ENCODE measurements at regions of chr7 and their contacts with region 1.

Region 1: DNA sequence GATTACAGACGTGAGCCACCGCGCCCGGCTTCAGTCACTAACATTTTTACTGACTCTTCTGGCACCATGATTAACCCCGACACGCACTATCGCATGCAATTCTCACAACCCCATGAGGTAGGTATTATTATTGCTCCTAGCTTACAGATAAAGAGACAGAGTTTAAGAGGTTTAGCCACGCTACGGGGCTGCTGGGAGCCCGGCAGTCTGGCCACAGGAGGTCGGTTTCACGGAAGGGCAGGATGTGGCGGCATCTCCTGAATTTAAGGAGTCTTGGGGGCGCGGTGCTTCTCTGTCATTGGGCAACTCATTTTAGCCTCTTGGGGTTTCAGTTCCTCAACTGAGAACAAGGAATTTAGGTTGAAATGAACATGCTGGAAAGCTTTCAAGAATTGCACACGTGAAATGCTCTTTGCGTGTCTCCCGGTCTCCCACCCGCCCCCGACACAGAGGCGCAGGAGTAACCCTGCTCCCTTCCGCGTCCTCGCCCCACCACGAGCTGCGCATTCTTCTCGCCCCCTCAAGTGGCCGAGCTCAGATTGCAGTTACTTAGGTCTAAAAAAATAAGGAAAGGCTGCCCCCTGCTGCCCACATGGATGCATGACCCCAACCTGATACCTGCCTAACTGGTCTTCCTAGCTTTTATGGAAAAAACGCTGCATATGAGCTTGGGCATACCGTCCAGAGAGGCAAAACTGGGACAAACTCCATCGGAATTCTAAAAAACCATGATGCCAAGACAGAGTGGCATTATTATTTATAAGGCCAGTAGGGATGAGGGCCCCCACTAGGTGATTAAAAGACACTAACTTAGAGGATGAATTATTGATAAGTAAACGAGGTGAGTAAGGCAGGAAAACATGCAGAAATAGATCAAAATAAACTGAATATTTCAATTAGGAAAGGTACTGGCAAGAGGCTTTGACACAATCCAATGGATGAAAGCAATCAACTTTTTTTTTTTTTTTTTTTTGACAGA is 12.4 kb downstream of the PRSS2 start:
- DNase-seq: peak; percentile 83
- ATAC-seq: peak; percentile 93
- H3K4me3 ChIP-seq: no peak overlapping the region
- H3K27ac ChIP-seq: no peak overlapping the region
- H3K4me1 ChIP-seq: no peaks in the 10 kb centered on the region
- H3K27me3 ChIP-seq: peaks cover 0 to 10% of the 10 kb centered on the region in 2 experiments; a peak in 3 of 5 replicates
- CTCF ChIP-seq: peak; percentile 91
- EP300 ChIP-seq: no peak
- POLR2A ChIP-seq: no peak
- RAD21 ChIP-seq: peak; percentile 83

Region 2: DNA sequence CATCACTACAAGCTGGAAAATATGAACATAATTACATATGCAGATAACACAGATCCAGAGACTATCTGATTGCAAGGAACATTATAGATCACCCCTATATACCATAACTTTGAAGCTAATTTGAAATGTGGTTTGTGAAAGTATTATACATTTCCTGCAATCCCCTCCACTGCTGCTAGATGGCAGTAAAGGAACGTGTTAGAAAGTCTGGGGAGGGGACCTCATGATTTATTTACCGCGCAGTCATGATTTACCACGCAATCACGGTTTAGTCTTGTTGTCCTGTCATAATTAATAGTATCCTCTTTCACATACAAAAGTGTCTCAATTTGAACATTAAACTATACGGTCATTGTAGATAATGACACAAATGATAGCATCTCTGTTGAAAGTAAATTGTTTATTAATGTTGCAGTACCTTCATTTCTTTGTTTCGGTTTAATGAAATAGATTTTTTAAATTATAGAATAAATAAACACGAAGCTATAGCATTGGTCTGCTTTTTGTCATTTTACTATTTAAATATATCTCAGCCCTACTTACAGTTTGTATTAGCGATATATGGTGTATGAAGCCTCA is 179.3 kb before region 1 on chr7:
- CTCF ChIA-PET with region 1: interaction called, 15 read pairs
- POLR2A ChIA-PET with region 1: no interaction called
- in situ Hi-C with region 1: no loop called
- intact Hi-C with region 1: loop called (anchors 1 kb)
- DNase-seq: peak; percentile 52
- ATAC-seq: peak; percentile 32; the same call in 1 of the 3 replicates
- H3K4me3 ChIP-seq: no peak overlapping the region
- H3K27ac ChIP-seq: no peak overlapping the region
- H3K4me1 ChIP-seq: no peaks in the 10 kb centered on the region
- H3K27me3 ChIP-seq: peaks cover 0 to 1% of the 10 kb centered on the region in 2 experiments; a peak in 2 of 5 replicates
- CTCF ChIP-seq: peak; percentile 71
- EP300 ChIP-seq: no peak
- POLR2A ChIP-seq: no peak
- RAD21 ChIP-seq: no peak

Region 3: GRCh38 chr7:142626420-142627035 is 156.7 kb before region 1 on chr7:
- CTCF ChIA-PET with region 1: interaction called, 30 read pairs
- POLR2A ChIA-PET with region 1: no interaction called
- in situ Hi-C with region 1: loop called (anchors 5 kb)
- intact Hi-C with region 1: no loop called
- DNase-seq: peak; percentile 25
- ATAC-seq: peak; percentile 89
- H3K4me3 ChIP-seq: no peak overlapping the region
- H3K27ac ChIP-seq: no peak overlapping the region
- H3K4me1 ChIP-seq: no peaks in the 10 kb centered on the region
- H3K27me3 ChIP-seq: peaks cover 0 to 13% of the 10 kb centered on the region in 2 experiments; a peak in 2 of 5 replicates
- CTCF ChIP-seq: peak; percentile 58
- EP300 ChIP-seq: no peak
- POLR2A ChIP-seq: no peak
- RAD21 ChIP-seq: no peak

Region 4: GRCh38 chr7:142632291-142633134 is 150.7 kb before region 1 on chr7:
- CTCF ChIA-PET with region 1: interaction called, 30 read pairs
- POLR2A ChIA-PET with region 1: no interaction called
- in situ Hi-C with region 1: loop called (anchors 5 kb)
- intact Hi-C with region 1: loop called (anchors 1 kb)
- DNase-seq: peak; percentile 32
- ATAC-seq: peak; percentile 96
- H3K4me3 ChIP-seq: no peak overlapping the region
- H3K27ac ChIP-seq: no peak overlapping the region
- H3K4me1 ChIP-seq: no peaks in the 10 kb centered on the region
- H3K27me3 ChIP-seq: peaks cover 0 to 22% of the 10 kb centered on the region in 2 experiments; a peak in 2 of 5 replicates
- CTCF ChIP-seq: peak; percentile 74
- EP300 ChIP-seq: no peak
- POLR2A ChIP-seq: no peak
- RAD21 ChIP-seq: peak; percentile 50; the same call in 1 of the 2 replicates

Region 5: GRCh38 chr7:142669074-142669654 is 114.0 kb before region 1 on chr7:
- CTCF ChIA-PET with region 1: interaction called, 10 read pairs
- POLR2A ChIA-PET with region 1: no interaction called
- in situ Hi-C with region 1: no loop called
- intact Hi-C with region 1: no loop called
- DNase-seq: no peak
- ATAC-seq: no peak
- H3K4me3 ChIP-seq: no peak overlapping the region
- H3K27ac ChIP-seq: no peak overlapping the region
- H3K4me1 ChIP-seq: no peaks in the 10 kb centered on the region
- H3K27me3 ChIP-seq: no peaks in the 10 kb centered on the region
- CTCF ChIP-seq: no peak
- EP300 ChIP-seq: no peak
- POLR2A ChIP-seq: no peak
- RAD21 ChIP-seq: no peak

Region 6: GRCh38 chr7:142711746-142712619 is 71.2 kb before region 1 on chr7:
- CTCF ChIA-PET with region 1: interaction called, 4 read pairs
- POLR2A ChIA-PET with region 1: no interaction called
- in situ Hi-C with region 1: no loop called
- intact Hi-C with region 1: loop called (anchors 1 kb)
- DNase-seq: no peak
- ATAC-seq: peak; percentile 62
- H3K4me3 ChIP-seq: no peak overlapping the region
- H3K27ac ChIP-seq: no peak overlapping the region
- H3K4me1 ChIP-seq: no peaks in the 10 kb centered on the region
- H3K27me3 ChIP-seq: peaks cover 0 to 7% of the 10 kb centered on the region in 2 experiments; a peak in 2 of 5 replicates
- CTCF ChIP-seq: peak; percentile 24
- EP300 ChIP-seq: no peak
- POLR2A ChIP-seq: no peak
- RAD21 ChIP-seq: no peak